ENCODE measurements at regions of chr15 and their contacts with region 1.

Region 1: GRCh38 chr15:92797168-92797951 is 102.8 kb upstream of the CHD2 start:
- DNase-seq: peak in 11 of 35 experiments; percentile 9 to 90 (median 30)
- ATAC-seq: peak; percentile 74 to 87 (median 86)
- H3K4me3 ChIP-seq: no peak overlapping the region
- H3K4me3 Mint-ChIP-seq: no peak overlapping the region
- H3K27ac ChIP-seq: no peak overlapping the region
- H3K27ac Mint-ChIP-seq: peak overlapping the region; percentile 56 to 87
- H3K4me1 ChIP-seq: no peaks in the 10 kb centered on the region
- H3K4me1 Mint-ChIP-seq: peaks cover 5 to 10% (median 6%) of the 10 kb centered on the region in 3 donors
- H3K27me3 ChIP-seq: no peaks in the 10 kb centered on the region
- H3K27me3 Mint-ChIP-seq: no peaks in the 10 kb centered on the region

Region 2: GRCh38 chr15:92820236-92821021 is 23.1 kb after region 1 on chr15:
- CTCF ChIA-PET with region 1: interaction called in 1 of 2 experiments, 4 read pairs
- POLR2A ChIA-PET with region 1: interaction called in 1 of 2 experiments, 14 read pairs
- DNase-seq: peak; percentile 64 to 93 (median 78)
- ATAC-seq: peak; percentile 84 to 92 (median 89)
- H3K4me3 ChIP-seq: peak overlapping the region; percentile 49 to 67
- H3K4me3 Mint-ChIP-seq: peak overlapping the region; percentile 86 to 91 (median 88)
- H3K27ac ChIP-seq: peak overlapping the region; percentile 93
- H3K27ac Mint-ChIP-seq: peak overlapping the region; percentile 89 to 94
- H3K4me1 ChIP-seq: peaks cover 41 to 44% of the 10 kb centered on the region in 2 experiments
- H3K4me1 Mint-ChIP-seq: peaks cover 59 to 67% (median 61%) of the 10 kb centered on the region in 3 donors
- H3K27me3 ChIP-seq: no peaks in the 10 kb centered on the region
- H3K27me3 Mint-ChIP-seq: no peaks in the 10 kb centered on the region

Region 3: DNA sequence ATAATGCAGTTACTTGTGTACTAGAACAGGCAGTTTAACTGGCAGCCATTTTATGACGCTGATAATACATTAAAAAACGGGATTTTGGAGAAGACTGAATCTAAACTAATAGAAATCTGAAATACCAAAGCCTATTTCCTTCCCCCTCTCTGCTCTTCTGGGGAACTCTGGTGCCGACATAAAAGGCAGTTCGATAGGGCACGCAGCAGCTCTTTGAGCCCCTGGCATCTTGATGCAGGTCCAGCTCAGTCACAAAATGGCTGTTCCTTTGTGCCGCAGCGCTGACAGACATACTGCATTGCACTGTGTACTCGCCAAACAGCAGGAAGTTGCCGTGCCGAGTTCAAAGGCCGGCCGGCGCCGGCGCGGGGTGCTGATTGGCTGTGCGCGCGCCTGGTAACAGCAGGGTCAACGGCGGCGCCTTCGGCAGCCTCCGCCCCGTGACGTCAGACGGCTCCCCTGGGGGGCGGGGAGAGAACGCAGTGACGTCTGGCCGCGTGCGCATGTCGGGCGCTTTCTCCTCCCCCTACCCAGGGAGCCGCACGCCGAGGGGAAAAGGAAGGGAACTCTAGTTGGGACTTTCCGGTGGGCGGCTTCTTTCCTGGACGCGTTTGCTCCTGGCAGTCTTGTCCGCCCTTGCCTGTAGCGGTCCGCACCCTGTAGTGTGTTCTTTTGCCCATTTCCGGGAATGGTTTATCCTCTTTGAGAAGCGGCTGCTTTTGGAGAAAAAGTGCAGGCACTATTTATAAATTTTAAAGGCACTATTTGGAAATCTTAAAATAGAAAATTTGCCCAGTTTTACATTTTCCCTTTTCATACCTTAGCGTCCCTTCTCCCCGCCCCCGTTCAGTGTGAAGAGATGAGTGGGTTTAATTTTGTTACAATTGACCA is 106.8 kb after region 1 on chr15:
- CTCF ChIA-PET with region 1: interaction called, 5 to 32 read pairs
- POLR2A ChIA-PET with region 1: interaction called, 5 to 14 read pairs
- DNase-seq: peak; percentile 96 to 100 (median 99)
- ATAC-seq: peak; percentile 84 to 89 (median 87)
- H3K4me3 ChIP-seq: peak overlapping the region; percentile 87 to 88
- H3K4me3 Mint-ChIP-seq: peak overlapping the region; percentile 93 to 99 (median 99)
- H3K27ac ChIP-seq: peak overlapping the region; percentile 96
- H3K27ac Mint-ChIP-seq: peak overlapping the region; percentile 100
- H3K4me1 ChIP-seq: peaks cover 22 to 59% of the 10 kb centered on the region in 2 experiments
- H3K4me1 Mint-ChIP-seq: peaks cover 62 to 82% (median 68%) of the 10 kb centered on the region in 3 donors
- H3K27me3 ChIP-seq: no peaks in the 10 kb centered on the region
- H3K27me3 Mint-ChIP-seq: no peaks in the 10 kb centered on the region

Region 4: DNA sequence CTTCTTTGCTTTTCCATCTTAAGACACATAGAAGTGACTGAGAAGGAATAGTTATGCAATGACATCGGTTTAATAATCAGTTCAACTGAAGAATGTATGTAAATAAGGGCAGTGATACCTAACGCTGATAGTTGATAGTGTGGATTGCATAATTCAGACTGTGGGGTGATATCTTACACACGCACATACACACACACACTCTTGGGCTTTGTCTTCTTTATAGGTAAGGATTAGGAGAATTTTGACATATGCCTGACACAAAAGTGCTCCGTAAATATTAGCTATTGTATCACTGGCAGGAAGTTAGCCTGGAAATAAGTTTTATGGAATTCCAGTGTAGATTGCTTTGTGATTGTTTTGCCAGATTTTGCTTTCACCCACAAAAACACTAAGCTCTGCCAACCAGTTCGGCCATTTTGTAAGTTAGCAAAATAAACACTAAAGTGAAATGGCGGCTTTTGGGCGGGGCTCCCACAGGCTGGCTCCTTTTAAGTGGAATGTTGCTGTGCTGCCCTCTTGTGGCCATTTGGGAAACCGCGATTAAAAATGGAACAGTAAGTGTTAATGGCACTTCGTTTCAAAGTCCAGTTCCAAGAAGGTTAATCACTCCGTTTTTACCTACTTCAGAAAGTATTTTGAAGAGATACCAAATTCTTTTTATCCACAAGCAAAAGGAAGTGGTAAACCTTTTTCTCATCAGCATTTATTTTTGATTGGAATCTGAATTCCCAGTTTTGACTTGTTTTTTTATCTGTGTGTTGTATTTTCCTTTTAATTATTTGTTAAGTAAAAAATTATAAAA is 120.4 kb after region 1 on chr15:
- CTCF ChIA-PET with region 1: interaction called, 18 to 84 read pairs
- POLR2A ChIA-PET with region 1: interaction called, 3 to 5 read pairs
- DNase-seq: peak; percentile 77 to 97 (median 89)
- ATAC-seq: peak; percentile 32 to 41 (median 36)
- H3K4me3 ChIP-seq: no peak overlapping the region
- H3K4me3 Mint-ChIP-seq: peak overlapping the region; percentile 7 to 74 (median 29)
- H3K27ac ChIP-seq: peak overlapping the region; percentile 93
- H3K27ac Mint-ChIP-seq: peak overlapping the region; percentile 95 to 96
- H3K4me1 ChIP-seq: peaks cover 69 to 75% of the 10 kb centered on the region in 2 experiments
- H3K4me1 Mint-ChIP-seq: peaks cover 86 to 89% (median 89%) of the 10 kb centered on the region in 3 donors
- H3K27me3 ChIP-seq: no peaks in the 10 kb centered on the region
- H3K27me3 Mint-ChIP-seq: no peaks in the 10 kb centered on the region

Measured in T-cell (primary cell).